CD8-positive, alpha-beta T cell (primary cell): ENCODE measurements at regions of chr14 and their contacts with region 1.

Region 1: DNA sequence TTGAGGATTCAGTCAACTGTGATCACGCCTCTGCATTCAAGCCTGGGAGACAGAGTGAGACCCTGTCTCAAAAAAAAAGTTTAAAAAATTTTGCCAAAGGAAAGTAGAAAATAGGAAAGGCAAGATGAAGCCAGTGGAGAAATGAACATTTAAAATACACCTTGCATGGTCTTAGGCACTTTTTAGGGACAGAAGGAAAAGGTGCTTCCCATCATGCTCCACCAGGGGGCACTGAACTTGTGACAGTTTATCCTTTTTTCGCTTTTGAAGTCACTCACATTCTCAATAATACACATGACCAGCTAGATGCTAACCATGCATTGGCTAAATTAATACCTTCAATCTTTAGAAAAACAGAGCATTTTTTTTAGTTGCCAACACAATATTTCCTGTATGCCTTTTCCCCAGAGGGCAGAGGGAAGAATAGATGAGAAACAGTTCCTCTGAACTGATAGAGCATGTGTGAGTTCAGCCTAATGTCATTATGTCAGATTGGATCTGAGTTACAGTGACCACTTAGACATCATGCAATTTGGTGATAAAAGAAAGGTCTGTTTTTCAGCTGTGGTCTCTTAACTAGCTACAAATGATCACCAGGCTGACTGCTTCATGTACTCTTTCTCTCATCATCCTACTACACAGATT is 221.8 kb upstream of the SSTR1 start:
- DNase-seq: peak in 8 of 9 experiments; percentile 24 to 75 (median 58)
- ATAC-seq: peak; percentile 51
- H3K4me3 ChIP-seq: no peak overlapping the region
- H3K4me3 Mint-ChIP-seq: no peak overlapping the region
- H3K27ac ChIP-seq: no peak overlapping the region
- H3K27ac Mint-ChIP-seq: no peak overlapping the region
- H3K4me1 ChIP-seq: peaks cover 6% of the 10 kb centered on the region
- H3K4me1 Mint-ChIP-seq: peaks cover 7% of the 10 kb centered on the region
- H3K27me3 ChIP-seq: no peaks in the 10 kb centered on the region
- H3K27me3 Mint-ChIP-seq: no peaks in the 10 kb centered on the region
- CTCF ChIP-seq: peak; percentile 82

Region 2: GRCh38 chr14:38089123-38089522 is 103.2 kb after region 1 on chr14:
- CTCF ChIA-PET with region 1: no interaction called
- POLR2A ChIA-PET with region 1: no interaction called
- intact Hi-C with region 1: loop called in 1 of 2 experiments (anchors 5 kb)
- DNase-seq: peak in 1 of 9 experiments; percentile 25
- ATAC-seq: no peak
- H3K4me3 ChIP-seq: peak overlapping the region; percentile 42 to 44
- H3K4me3 Mint-ChIP-seq: peak overlapping the region; percentile 48
- H3K27ac ChIP-seq: peak overlapping the region; percentile 42 to 49
- H3K27ac Mint-ChIP-seq: peak overlapping the region; percentile 80
- H3K4me1 ChIP-seq: peaks cover 27% of the 10 kb centered on the region
- H3K4me1 Mint-ChIP-seq: peaks cover 30% of the 10 kb centered on the region
- H3K27me3 ChIP-seq: no peaks in the 10 kb centered on the region
- H3K27me3 Mint-ChIP-seq: no peaks in the 10 kb centered on the region
- CTCF ChIP-seq: no peak

Region 3: DNA sequence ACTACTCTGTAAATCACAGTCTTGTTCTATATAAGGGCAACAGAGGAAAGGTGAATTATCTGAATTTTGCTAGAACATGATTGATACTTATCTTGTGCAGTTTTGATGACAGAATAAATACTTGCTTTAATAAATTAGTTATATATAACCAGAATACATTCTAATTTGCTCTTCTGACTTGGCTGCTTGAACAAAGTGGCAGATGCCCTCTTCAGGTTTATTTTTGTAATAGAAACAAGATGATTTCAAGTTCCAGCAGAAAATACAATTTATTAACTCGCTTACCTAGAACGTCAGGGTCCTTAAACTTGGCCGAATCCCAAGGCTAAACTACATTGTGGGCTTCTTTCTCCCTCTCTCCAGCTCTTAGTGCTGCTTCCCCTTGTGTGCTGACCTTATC is 164.1 kb after region 1 on chr14:
- CTCF ChIA-PET with region 1: interaction called, 5 read pairs
- POLR2A ChIA-PET with region 1: no interaction called
- intact Hi-C with region 1: loop called (anchors 1 to 5 kb)
- DNase-seq: peak in 2 of 9 experiments; percentile 10 to 14
- ATAC-seq: no peak
- H3K4me3 ChIP-seq: no peak overlapping the region
- H3K4me3 Mint-ChIP-seq: no peak overlapping the region
- H3K27ac ChIP-seq: no peak overlapping the region
- H3K27ac Mint-ChIP-seq: no peak overlapping the region
- H3K4me1 ChIP-seq: no peaks in the 10 kb centered on the region
- H3K4me1 Mint-ChIP-seq: no peaks in the 10 kb centered on the region
- H3K27me3 ChIP-seq: no peaks in the 10 kb centered on the region
- H3K27me3 Mint-ChIP-seq: no peaks in the 10 kb centered on the region
- CTCF ChIP-seq: no peak

Region 4: GRCh38 chr14:38197001-38197783 is 211.2 kb after region 1 on chr14:
- CTCF ChIA-PET with region 1: interaction called, 50 read pairs
- POLR2A ChIA-PET with region 1: no interaction called
- intact Hi-C with region 1: loop called (anchors 1 kb)
- DNase-seq: peak in 2 of 9 experiments; percentile 18 to 41
- ATAC-seq: no peak
- H3K4me3 ChIP-seq: no peak overlapping the region
- H3K4me3 Mint-ChIP-seq: no peak overlapping the region
- H3K27ac ChIP-seq: no peak overlapping the region
- H3K27ac Mint-ChIP-seq: no peak overlapping the region
- H3K4me1 ChIP-seq: peaks cover 4% of the 10 kb centered on the region
- H3K4me1 Mint-ChIP-seq: peaks cover 6% of the 10 kb centered on the region
- H3K27me3 ChIP-seq: no peaks in the 10 kb centered on the region
- H3K27me3 Mint-ChIP-seq: no peaks in the 10 kb centered on the region
- CTCF ChIP-seq: peak; percentile 77

Region 5: GRCh38 chr14:38867561-38868150 is 881.7 kb after region 1 on chr14:
- CTCF ChIA-PET with region 1: no interaction called
- POLR2A ChIA-PET with region 1: no interaction called
- intact Hi-C with region 1: loop called in 1 of 2 experiments (anchors 2 kb)
- DNase-seq: peak in 8 of 9 experiments; percentile 26 to 70 (median 48)
- ATAC-seq: peak; percentile 34
- H3K4me3 ChIP-seq: no peak overlapping the region
- H3K4me3 Mint-ChIP-seq: no peak overlapping the region
- H3K27ac ChIP-seq: no peak overlapping the region
- H3K27ac Mint-ChIP-seq: no peak overlapping the region
- H3K4me1 ChIP-seq: no peaks in the 10 kb centered on the region
- H3K4me1 Mint-ChIP-seq: no peaks in the 10 kb centered on the region
- H3K27me3 ChIP-seq: no peaks in the 10 kb centered on the region
- H3K27me3 Mint-ChIP-seq: peaks cover 2% of the 10 kb centered on the region
- CTCF ChIP-seq: peak; percentile 74